ENCODE measurements at regions of chr11 and their contacts with region 1.

Region 1: DNA sequence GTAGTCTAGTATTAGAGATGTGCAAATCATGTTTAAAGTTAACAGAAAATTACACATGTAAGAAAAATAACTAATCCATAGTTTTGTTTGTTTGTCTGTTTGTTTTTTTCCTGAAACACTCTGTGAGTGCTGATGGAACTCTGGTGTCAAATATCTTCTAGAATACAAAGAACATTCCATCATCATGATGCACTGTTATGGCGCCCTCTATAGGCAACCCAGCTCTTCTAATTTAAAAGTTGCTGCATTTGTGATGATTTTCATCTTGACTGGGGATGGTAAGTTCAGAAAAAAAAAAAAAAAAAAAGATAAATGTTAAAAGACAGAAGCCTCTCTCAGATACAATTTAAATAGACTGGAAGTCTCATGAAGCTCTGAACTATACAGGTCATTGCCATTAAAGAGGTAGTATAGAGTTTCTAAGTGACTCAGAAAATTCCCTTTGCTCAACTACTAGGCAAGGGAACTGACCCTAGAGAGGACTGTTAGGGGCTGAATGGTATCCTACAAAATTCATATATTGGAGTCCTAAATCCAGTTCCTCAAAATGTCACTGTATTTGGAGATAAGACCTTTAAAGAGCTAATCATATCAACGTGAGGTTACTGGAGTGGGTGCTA is 597.2 kb upstream of the ANO3 start:
- DNase-seq: no peak
- H3K4me3 ChIP-seq: no peak overlapping the region
- H3K27ac ChIP-seq: no peak overlapping the region
- H3K4me1 ChIP-seq: no peaks in the 10 kb centered on the region
- H3K27me3 ChIP-seq: no peaks in the 10 kb centered on the region
- CTCF ChIP-seq: peak in 2 of 3 experiments; percentile 34 to 56; a peak in 2 of 4 replicates
- EP300 ChIP-seq: no peak
- POLR2A ChIP-seq: no peak
- RAD21 ChIP-seq: peak; percentile 64 to 68

Region 2: DNA sequence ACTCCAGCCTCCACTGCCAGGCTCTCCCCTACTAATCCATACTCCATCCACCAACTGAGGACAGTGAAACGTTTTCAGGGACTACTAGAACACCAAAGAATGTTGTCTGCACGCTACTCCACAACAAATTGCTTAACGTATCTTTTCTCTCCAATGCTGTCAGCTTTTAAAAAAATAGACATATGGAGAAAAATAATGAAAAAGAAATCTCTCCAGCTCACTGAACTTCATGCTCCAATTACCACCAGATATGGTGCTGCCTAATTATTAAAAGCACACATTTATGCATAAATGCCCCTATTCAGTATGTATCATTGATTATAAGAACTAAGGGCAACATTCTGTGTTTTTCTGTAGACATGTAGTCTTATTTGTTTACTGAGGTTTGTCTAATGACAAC is 75.0 kb before region 1 on chr11:
- CTCF ChIA-PET with region 1: no interaction called
- POLR2A ChIA-PET with region 1: no interaction called
- DNase-seq: no peak
- H3K4me3 ChIP-seq: no peak overlapping the region
- H3K27ac ChIP-seq: no peak overlapping the region
- H3K4me1 ChIP-seq: no peaks in the 10 kb centered on the region
- H3K27me3 ChIP-seq: no peaks in the 10 kb centered on the region
- CTCF ChIP-seq: no peak
- EP300 ChIP-seq: no peak
- POLR2A ChIP-seq: no peak
- RAD21 ChIP-seq: no peak

Region 3: DNA sequence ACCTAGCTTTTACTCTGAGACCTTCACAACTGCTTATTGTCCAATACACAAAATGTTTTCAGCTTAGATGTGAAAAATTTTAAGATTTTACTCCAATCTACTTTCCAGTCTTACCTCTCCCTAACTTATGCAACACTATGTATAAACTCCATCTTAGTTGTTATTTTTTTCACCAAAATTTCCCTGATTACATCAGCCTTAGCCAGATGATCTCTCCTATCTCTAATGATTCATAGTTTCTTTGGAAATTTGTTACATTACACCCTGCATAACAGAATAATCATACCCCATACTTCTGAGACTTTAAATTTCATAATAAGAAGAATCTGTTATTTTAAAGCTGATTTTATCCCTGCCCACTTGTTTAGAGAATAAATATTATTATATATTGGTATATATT is 23.7 kb before region 1 on chr11:
- CTCF ChIA-PET with region 1: no interaction called
- POLR2A ChIA-PET with region 1: no interaction called
- DNase-seq: no peak
- H3K4me3 ChIP-seq: no peak overlapping the region
- H3K27ac ChIP-seq: no peak overlapping the region
- H3K4me1 ChIP-seq: no peaks in the 10 kb centered on the region
- H3K27me3 ChIP-seq: no peaks in the 10 kb centered on the region
- CTCF ChIP-seq: no peak
- EP300 ChIP-seq: no peak
- POLR2A ChIP-seq: no peak
- RAD21 ChIP-seq: no peak

Region 4: GRCh38 chr11:25755923-25756584 is 21.4 kb after region 1 on chr11:
- CTCF ChIA-PET with region 1: interaction called, 20 read pairs
- POLR2A ChIA-PET with region 1: no interaction called
- DNase-seq: no peak
- H3K4me3 ChIP-seq: no peak overlapping the region
- H3K27ac ChIP-seq: no peak overlapping the region
- H3K4me1 ChIP-seq: no peaks in the 10 kb centered on the region
- H3K27me3 ChIP-seq: no peaks in the 10 kb centered on the region
- CTCF ChIP-seq: no peak
- EP300 ChIP-seq: no peak
- POLR2A ChIP-seq: no peak
- RAD21 ChIP-seq: no peak

Measured in H1 (cell line).